HepG2 (cell line): ENCODE measurements at regions of chr5 and their contacts with region 1.

Region 1: DNA sequence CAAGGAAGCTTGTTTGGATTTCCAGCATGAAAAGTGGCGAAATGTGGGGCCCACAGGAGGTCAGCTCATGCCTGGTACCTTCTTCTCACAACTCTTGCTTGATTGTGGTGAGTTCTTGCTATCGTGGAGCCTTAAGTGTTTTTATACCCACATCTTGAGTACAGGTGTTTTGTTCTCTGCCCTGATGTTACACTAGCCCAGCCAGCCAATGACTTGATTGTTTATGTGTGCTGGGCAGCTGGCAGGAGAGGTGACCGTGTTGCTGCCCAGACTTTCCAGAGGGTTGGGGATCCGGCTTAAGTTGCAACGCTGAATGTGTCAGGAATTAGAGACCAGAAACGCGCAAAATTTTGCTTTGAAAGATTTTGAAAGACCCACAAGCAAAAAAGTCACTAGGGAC is 24.0 kb upstream of the TPPP start:
- DNase-seq: no peak
- ATAC-seq: no peak
- H3K4me3 ChIP-seq: no peak overlapping the region
- H3K27ac ChIP-seq: no peak overlapping the region
- H3K4me1 ChIP-seq: no peaks in the 10 kb centered on the region
- H3K27me3 ChIP-seq: no peaks in the 10 kb centered on the region
- CTCF ChIP-seq: no peak
- EP300 ChIP-seq: no peak
- POLR2A ChIP-seq: no peak
- RAD21 ChIP-seq: no peak

Region 2: GRCh38 chr5:671459-672328 is 45.4 kb before region 1 on chr5:
- CTCF ChIA-PET with region 1: no interaction called
- POLR2A ChIA-PET with region 1: no interaction called
- in situ Hi-C with region 1: no loop called
- intact Hi-C with region 1: no loop called
- DNase-seq: peak; percentile 57
- ATAC-seq: peak; percentile 76
- H3K4me3 ChIP-seq: peak overlapping the region; percentile 28 to 64 (median 47); a peak in 4 of 6 replicates
- H3K27ac ChIP-seq: peak overlapping the region; percentile 43
- H3K4me1 ChIP-seq: peaks cover 45% of the 10 kb centered on the region
- H3K27me3 ChIP-seq: peaks cover 3 to 19% of the 10 kb centered on the region in 2 experiments; a peak in 4 of 5 replicates
- CTCF ChIP-seq: peak; percentile 96
- EP300 ChIP-seq: no peak; a peak in 1 of 4 replicates
- POLR2A ChIP-seq: 0 out of 4 replicates have a peak, but pooled peaks of 1 of the 2 experiments have one; percentile 25
- RAD21 ChIP-seq: peak; percentile 90

Region 3: GRCh38 chr5:801472-801871 is 84.3 kb after region 1 on chr5:
- CTCF ChIA-PET with region 1: no interaction called
- POLR2A ChIA-PET with region 1: no interaction called
- in situ Hi-C with region 1: loop called (anchors 5 kb)
- intact Hi-C with region 1: loop called (anchors 5 kb)
- DNase-seq: no peak
- ATAC-seq: no peak
- H3K4me3 ChIP-seq: no peak overlapping the region
- H3K27ac ChIP-seq: no peak overlapping the region
- H3K4me1 ChIP-seq: no peaks in the 10 kb centered on the region
- H3K27me3 ChIP-seq: no peaks in the 10 kb centered on the region; a peak in 1 of 5 replicates
- CTCF ChIP-seq: no peak
- EP300 ChIP-seq: no peak
- POLR2A ChIP-seq: no peak
- RAD21 ChIP-seq: no peak